ENCODE measurements at regions of chr6 and their contacts with region 1.

Region 1: GRCh38 chr6:25490018-25490801 is 161.8 kb upstream of the SCGN start:
- DNase-seq: peak; percentile 47
- ATAC-seq: peak; percentile 87
- H3K4me3 ChIP-seq: no peak overlapping the region
- H3K27ac ChIP-seq: no peak overlapping the region
- H3K4me1 ChIP-seq: no peaks in the 10 kb centered on the region
- H3K27me3 ChIP-seq: no peaks in the 10 kb centered on the region
- CTCF ChIP-seq: peak; percentile 82

Region 2: GRCh38 chr6:25223490-25223991 is 266.7 kb before region 1 on chr6:
- CTCF ChIA-PET with region 1: interaction called, 4 read pairs
- POLR2A ChIA-PET with region 1: no interaction called
- in situ Hi-C with region 1: no loop called
- intact Hi-C with region 1: loop called (anchors 2 kb)
- DNase-seq: peak; percentile 45
- ATAC-seq: no peak
- H3K4me3 ChIP-seq: no peak overlapping the region
- H3K27ac ChIP-seq: no peak overlapping the region
- H3K4me1 ChIP-seq: no peaks in the 10 kb centered on the region; the same call in none of the 2 replicates
- H3K27me3 ChIP-seq: no peaks in the 10 kb centered on the region; the same call in 1 of the 2 replicates
- CTCF ChIP-seq: peak; percentile 84

Region 3: DNA sequence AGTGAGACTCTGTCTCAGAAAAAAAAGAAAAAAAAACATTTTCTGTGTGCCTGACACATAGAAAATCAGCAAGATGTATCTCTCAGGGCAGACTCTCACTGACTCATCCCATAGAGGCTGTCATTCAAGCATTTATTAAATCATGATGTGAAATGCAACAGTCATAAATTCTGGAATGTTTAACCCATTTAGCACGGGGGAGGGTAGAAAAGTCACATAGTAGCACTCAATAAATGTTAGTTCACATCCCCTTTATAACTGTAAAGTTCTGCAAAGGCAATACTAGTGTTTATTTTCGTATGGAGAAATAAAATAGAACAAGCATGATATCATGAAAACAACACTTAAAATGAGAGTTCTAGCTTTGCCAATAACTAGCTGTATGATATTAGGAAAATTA is 226.6 kb before region 1 on chr6:
- CTCF ChIA-PET with region 1: interaction called, 12 read pairs
- POLR2A ChIA-PET with region 1: no interaction called
- in situ Hi-C with region 1: no loop called
- intact Hi-C with region 1: loop called (anchors 1 kb)
- DNase-seq: no peak
- ATAC-seq: no peak
- H3K4me3 ChIP-seq: no peak overlapping the region
- H3K27ac ChIP-seq: no peak overlapping the region
- H3K4me1 ChIP-seq: no peaks in the 10 kb centered on the region
- H3K27me3 ChIP-seq: peaks cover 3% of the 10 kb centered on the region; the same call in 1 of the 2 replicates
- CTCF ChIP-seq: no peak

Region 4: DNA sequence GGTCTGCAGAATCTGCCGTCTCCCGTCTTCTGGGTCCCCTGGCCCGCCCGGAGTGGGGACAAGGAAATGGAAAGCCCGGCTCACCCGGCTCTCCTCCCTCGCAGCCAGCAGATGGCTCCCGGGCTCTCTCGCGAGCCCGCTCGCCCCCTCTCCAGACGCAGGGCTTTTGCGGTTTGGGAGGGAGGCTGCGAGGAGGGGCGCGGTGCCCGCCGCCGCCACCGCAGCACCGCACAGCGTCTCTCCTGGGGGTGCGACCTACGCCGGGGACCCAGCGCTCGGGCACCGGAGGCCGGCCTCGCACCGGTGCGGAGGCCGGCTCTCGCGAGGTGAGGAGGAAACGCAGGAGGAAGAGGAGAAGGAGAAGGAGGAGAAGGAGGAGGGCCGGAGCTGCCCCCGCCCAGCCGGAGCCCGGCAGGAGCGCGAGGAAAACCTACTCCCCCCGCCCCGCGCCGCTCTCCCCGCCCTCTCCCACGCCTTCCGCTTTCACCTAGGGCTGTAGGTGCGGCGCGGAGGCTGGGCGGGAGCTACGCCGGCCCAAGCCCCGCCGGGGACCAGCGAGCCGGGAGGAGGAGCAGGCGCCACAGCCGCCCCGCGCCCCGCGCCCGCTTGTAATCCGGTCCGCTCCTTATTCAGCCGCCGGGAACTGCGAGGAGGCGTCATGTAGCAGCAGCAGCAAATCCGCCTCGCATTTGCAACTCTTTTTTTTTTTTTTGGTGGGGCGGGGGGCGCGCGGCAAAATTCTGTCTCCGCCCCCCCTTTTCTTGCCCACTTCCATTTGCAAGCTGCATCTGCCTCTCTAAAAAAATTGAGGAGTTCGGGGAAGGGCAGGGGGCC is 211.1 kb before region 1 on chr6 and contains the start of gene CARMIL1:
- CTCF ChIA-PET with region 1: interaction called, 12 read pairs
- POLR2A ChIA-PET with region 1: no interaction called
- in situ Hi-C with region 1: no loop called
- intact Hi-C with region 1: loop called (anchors 2 kb)
- DNase-seq: no peak
- ATAC-seq: peak; percentile 93
- H3K4me3 ChIP-seq: peak within 1 kb of the TSS; percentile 62 to 75
- H3K27ac ChIP-seq: peak within 1 kb of the TSS; percentile 45; the same call in 1 of the 2 replicates
- H3K4me1 ChIP-seq: peaks cover 9% of the 10 kb centered on the region; the same call in 1 of the 2 replicates
- H3K27me3 ChIP-seq: peaks cover 2% of the 10 kb centered on the region; the same call in 1 of the 2 replicates
- CTCF ChIP-seq: peak; percentile 88
- total RNA-seq, gene CARMIL1: 4.0 TPM

Region 5: GRCh38 chr6:25519856-25520255 is 29.6 kb after region 1 on chr6:
- CTCF ChIA-PET with region 1: no interaction called
- POLR2A ChIA-PET with region 1: no interaction called
- in situ Hi-C with region 1: no loop called
- intact Hi-C with region 1: no loop called
- DNase-seq: no peak
- ATAC-seq: no peak
- H3K4me3 ChIP-seq: no peak overlapping the region
- H3K27ac ChIP-seq: no peak overlapping the region
- H3K4me1 ChIP-seq: no peaks in the 10 kb centered on the region
- H3K27me3 ChIP-seq: no peaks in the 10 kb centered on the region
- CTCF ChIP-seq: no peak

Measured in Panc1 (cell line).